ENCODE measurements at regions of chr17 and their contacts with region 1.

Region 1: DNA sequence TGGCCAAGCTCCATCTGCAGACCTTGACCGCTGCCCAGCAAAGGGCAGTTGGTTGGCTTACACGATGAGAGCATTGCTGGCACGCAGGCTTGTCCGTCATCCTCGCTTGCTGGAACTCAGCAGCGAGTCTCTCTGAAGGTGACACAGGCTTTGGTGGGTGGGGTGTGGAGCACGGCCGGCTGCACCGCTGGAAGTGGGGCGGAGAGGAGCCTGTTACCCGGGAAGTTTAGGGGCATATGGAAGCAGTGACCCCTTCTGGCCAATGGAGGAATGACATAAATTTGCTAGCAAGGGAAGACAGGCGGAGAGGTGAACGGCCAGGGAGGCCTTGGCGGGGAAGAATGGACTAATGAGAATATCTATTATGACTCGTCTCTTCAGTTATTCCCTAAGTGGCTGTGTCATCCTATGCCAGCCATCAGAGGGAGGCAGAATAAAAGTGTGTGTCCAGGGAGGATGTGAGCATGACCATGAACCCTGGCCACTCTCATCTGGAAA is 65.9 kb upstream of the SDK2 start:
- DNase-seq: peak; percentile 40 to 81 (median 62)
- ATAC-seq: peak; percentile 83
- H3K4me3 ChIP-seq: no peak overlapping the region
- H3K4me3 Mint-ChIP-seq: peak overlapping the region in 5 of 10 donors; percentile 1 to 40 (median 34)
- H3K27ac ChIP-seq: no peak overlapping the region
- H3K27ac Mint-ChIP-seq: peak overlapping the region in 5 of 9 donors; percentile 12 to 88 (median 72)
- H3K4me1 ChIP-seq: peaks cover 0 to 11% of the 10 kb centered on the region in 2 donors
- H3K4me1 Mint-ChIP-seq: peaks cover 11 to 19% (median 17%) of the 10 kb centered on the region in 7 donors
- H3K27me3 ChIP-seq: no peaks in the 10 kb centered on the region
- H3K27me3 Mint-ChIP-seq: peaks cover 0 to 19% (median 0%) of the 10 kb centered on the region in 5 donors

Region 2: DNA sequence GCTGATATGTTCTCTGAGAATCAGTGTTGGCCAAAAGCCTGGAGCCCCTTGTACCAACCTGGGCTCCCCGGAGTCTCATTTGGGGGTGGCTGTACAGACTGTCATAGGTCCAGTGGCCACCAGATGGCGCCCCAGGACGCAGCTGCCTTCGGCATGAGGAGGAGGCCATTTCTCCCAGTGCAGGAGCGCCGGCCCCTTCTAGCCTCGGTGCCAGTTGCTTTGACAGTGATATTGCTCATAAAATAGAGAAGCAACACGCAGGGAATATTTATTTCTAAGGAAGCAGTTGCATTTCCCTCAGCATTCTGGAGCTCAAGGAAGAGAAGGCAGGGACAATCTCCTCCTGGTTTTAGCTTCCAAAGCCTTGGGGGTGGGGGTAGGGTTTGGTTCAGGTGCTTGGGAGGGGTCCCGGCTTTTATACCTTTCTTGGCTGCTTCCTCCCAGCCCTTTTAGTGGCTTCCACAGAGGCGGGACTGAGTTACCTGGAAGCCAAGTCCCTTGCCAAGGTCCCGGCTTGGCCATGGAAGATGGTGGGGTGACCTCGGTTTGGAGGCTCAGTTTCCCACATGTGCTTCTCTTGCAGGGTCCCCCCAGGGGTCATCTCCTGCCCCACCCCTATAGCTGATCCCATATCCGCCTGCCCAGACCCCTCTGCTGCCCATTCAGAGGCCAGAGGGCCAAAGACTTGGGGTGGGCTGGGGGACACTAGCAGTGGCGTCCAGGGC is 280.5 kb before region 1 on chr17:
- CTCF ChIA-PET with region 1: interaction called, 29 read pairs
- POLR2A ChIA-PET with region 1: no interaction called
- intact Hi-C with region 1: loop called (anchors 1 kb)
- DNase-seq: peak; percentile 68 to 90 (median 82)
- ATAC-seq: peak; percentile 96
- H3K4me3 ChIP-seq: no peak overlapping the region
- H3K4me3 Mint-ChIP-seq: peak overlapping the region in 7 of 10 donors; percentile 27 to 64 (median 37)
- H3K27ac ChIP-seq: no peak overlapping the region
- H3K27ac Mint-ChIP-seq: peak overlapping the region in 3 of 9 donors; percentile 1 to 55 (median 17)
- H3K4me1 ChIP-seq: no peaks in the 10 kb centered on the region
- H3K4me1 Mint-ChIP-seq: peaks cover 0 to 17% (median 15%) of the 10 kb centered on the region in 7 donors
- H3K27me3 ChIP-seq: no peaks in the 10 kb centered on the region
- H3K27me3 Mint-ChIP-seq: peaks cover 0 to 2% (median 0%) of the 10 kb centered on the region in 5 donors

Region 3: GRCh38 chr17:73657473-73658116 is 52.5 kb before region 1 on chr17:
- CTCF ChIA-PET with region 1: interaction called, 3 read pairs
- POLR2A ChIA-PET with region 1: interaction called, 3 read pairs
- intact Hi-C with region 1: loop called in 1 of 2 experiments (anchors 1 kb)
- DNase-seq: peak in 2 of 9 donors; percentile 9 to 26
- ATAC-seq: peak; percentile 63
- H3K4me3 ChIP-seq: no peak overlapping the region
- H3K4me3 Mint-ChIP-seq: no peak overlapping the region
- H3K27ac ChIP-seq: no peak overlapping the region
- H3K27ac Mint-ChIP-seq: peak overlapping the region in 2 of 9 donors; percentile 17 to 51
- H3K4me1 ChIP-seq: no peaks in the 10 kb centered on the region
- H3K4me1 Mint-ChIP-seq: peaks cover 3 to 16% (median 12%) of the 10 kb centered on the region in 7 donors
- H3K27me3 ChIP-seq: no peaks in the 10 kb centered on the region
- H3K27me3 Mint-ChIP-seq: peaks cover 0 to 21% (median 0%) of the 10 kb centered on the region in 5 donors

Region 4: GRCh38 chr17:73841431-73842060 is 131.4 kb after region 1 on chr17:
- CTCF ChIA-PET with region 1: interaction called, 9 read pairs
- POLR2A ChIA-PET with region 1: interaction called, 5 read pairs
- intact Hi-C with region 1: loop called in 1 of 2 experiments (anchors 1 kb)
- DNase-seq: peak in 3 of 9 donors; percentile 29 to 49 (median 33)
- ATAC-seq: peak; percentile 58
- H3K4me3 ChIP-seq: no peak overlapping the region
- H3K4me3 Mint-ChIP-seq: no peak overlapping the region
- H3K27ac ChIP-seq: no peak overlapping the region
- H3K27ac Mint-ChIP-seq: peak overlapping the region in 6 of 9 donors; percentile 12 to 63 (median 54)
- H3K4me1 ChIP-seq: no peaks in the 10 kb centered on the region
- H3K4me1 Mint-ChIP-seq: peaks cover 0 to 27% (median 13%) of the 10 kb centered on the region in 7 donors
- H3K27me3 ChIP-seq: no peaks in the 10 kb centered on the region
- H3K27me3 Mint-ChIP-seq: no peaks in the 10 kb centered on the region

Region 5: DNA sequence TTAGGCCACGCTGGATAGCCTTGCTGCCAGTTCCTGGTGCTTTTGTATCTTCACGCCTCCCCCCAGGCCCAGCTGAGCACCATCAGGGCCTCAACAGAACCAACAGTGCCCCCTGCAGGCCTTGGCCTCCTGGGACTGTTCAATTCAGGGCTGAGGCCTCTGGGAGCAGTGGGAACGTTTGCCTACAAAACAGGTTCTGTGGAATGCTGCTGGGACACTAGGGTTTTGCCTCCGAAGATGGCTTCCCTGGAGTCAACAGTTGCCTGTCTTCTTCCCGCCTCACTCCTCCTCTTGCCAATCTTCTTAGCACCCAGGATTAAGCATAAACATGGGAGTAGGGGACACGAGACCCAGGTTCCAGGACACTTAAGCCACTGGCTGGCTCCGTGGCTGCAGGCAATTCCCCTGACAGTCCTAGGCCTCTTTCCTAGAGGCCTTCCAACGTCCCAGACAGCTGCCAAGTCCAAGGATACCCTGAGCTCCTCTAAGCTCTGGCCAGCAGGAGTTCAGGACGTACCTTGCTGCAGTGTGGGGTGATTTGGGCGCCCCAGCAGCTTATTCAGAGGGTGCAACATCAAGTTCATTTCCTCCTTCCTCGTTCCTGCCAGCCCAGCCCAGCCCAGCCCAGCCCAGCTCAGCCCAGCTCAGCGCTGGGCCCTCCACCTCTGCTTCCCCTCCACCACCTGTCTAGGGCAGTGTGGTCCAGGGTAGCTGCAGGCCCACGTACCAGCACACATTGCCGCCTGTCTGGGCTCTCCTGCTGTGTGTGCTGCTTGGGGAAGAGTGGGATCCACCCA is 246.7 kb after region 1 on chr17:
- CTCF ChIA-PET with region 1: no interaction called
- POLR2A ChIA-PET with region 1: no interaction called
- intact Hi-C with region 1: loop called in 1 of 2 experiments (anchors 1 kb)
- DNase-seq: peak; percentile 18 to 65 (median 49)
- ATAC-seq: peak; percentile 70
- H3K4me3 ChIP-seq: no peak overlapping the region
- H3K4me3 Mint-ChIP-seq: no peak overlapping the region
- H3K27ac ChIP-seq: no peak overlapping the region
- H3K27ac Mint-ChIP-seq: no peak overlapping the region
- H3K4me1 ChIP-seq: no peaks in the 10 kb centered on the region
- H3K4me1 Mint-ChIP-seq: peaks cover 0 to 4% (median 0%) of the 10 kb centered on the region in 7 donors
- H3K27me3 ChIP-seq: no peaks in the 10 kb centered on the region
- H3K27me3 Mint-ChIP-seq: peaks cover 3 to 7% (median 4%) of the 10 kb centered on the region in 5 donors